ENCODE measurements at regions of chr17 and their contacts with region 1.

Region 1: GRCh38 chr17:39174907-39175694 is 9.1 kb upstream of the ARL5C start:
- DNase-seq: peak; percentile 67 to 91 (median 74)
- ATAC-seq: peak; percentile 95
- H3K4me3 ChIP-seq: no peak overlapping the region
- H3K4me3 Mint-ChIP-seq: no peak overlapping the region
- H3K27ac ChIP-seq: no peak overlapping the region
- H3K27ac Mint-ChIP-seq: no peak overlapping the region
- H3K4me1 ChIP-seq: peaks cover 22% of the 10 kb centered on the region
- H3K4me1 Mint-ChIP-seq: peaks cover 22% of the 10 kb centered on the region
- H3K27me3 ChIP-seq: no peaks in the 10 kb centered on the region
- H3K27me3 Mint-ChIP-seq: no peaks in the 10 kb centered on the region
- CTCF ChIP-seq: peak; percentile 82

Region 2: GRCh38 chr17:39069114-39069756 is 105.9 kb before region 1 on chr17:
- CTCF ChIA-PET with region 1: interaction called, 8 read pairs
- POLR2A ChIA-PET with region 1: no interaction called
- intact Hi-C with region 1: loop called (anchors 1 kb)
- DNase-seq: peak in 4 of 14 experiments; percentile 45 to 70 (median 66)
- ATAC-seq: peak; percentile 97
- H3K4me3 ChIP-seq: no peak overlapping the region
- H3K4me3 Mint-ChIP-seq: no peak overlapping the region
- H3K27ac ChIP-seq: no peak overlapping the region
- H3K27ac Mint-ChIP-seq: no peak overlapping the region
- H3K4me1 ChIP-seq: peaks cover 7% of the 10 kb centered on the region
- H3K4me1 Mint-ChIP-seq: peaks cover 6% of the 10 kb centered on the region
- H3K27me3 ChIP-seq: no peaks in the 10 kb centered on the region
- H3K27me3 Mint-ChIP-seq: no peaks in the 10 kb centered on the region
- CTCF ChIP-seq: peak; percentile 72

Region 3: GRCh38 chr17:39164675-39165143 is 10.4 kb before region 1 on chr17:
- CTCF ChIA-PET with region 1: interaction called, 47 read pairs
- POLR2A ChIA-PET with region 1: interaction called, 4 read pairs
- intact Hi-C with region 1: no loop called
- DNase-seq: peak; percentile 56 to 85 (median 63)
- ATAC-seq: peak; percentile 86
- H3K4me3 ChIP-seq: peak overlapping the region; percentile 60
- H3K4me3 Mint-ChIP-seq: peak overlapping the region; percentile 90
- H3K27ac ChIP-seq: no peak overlapping the region
- H3K27ac Mint-ChIP-seq: no peak overlapping the region
- H3K4me1 ChIP-seq: peaks cover 32% of the 10 kb centered on the region
- H3K4me1 Mint-ChIP-seq: peaks cover 27% of the 10 kb centered on the region
- H3K27me3 ChIP-seq: peaks cover 17 to 22% of the 10 kb centered on the region in 2 experiments
- H3K27me3 Mint-ChIP-seq: peaks cover 34% of the 10 kb centered on the region
- CTCF ChIP-seq: peak; percentile 94

Region 4: GRCh38 chr17:39208893-39209292 is 33.8 kb after region 1 on chr17:
- CTCF ChIA-PET with region 1: no interaction called
- POLR2A ChIA-PET with region 1: no interaction called
- intact Hi-C with region 1: no loop called
- DNase-seq: peak in 5 of 14 experiments; percentile 21 to 60 (median 28)
- ATAC-seq: peak; percentile 7
- H3K4me3 ChIP-seq: no peak overlapping the region
- H3K4me3 Mint-ChIP-seq: peak overlapping the region; percentile 60
- H3K27ac ChIP-seq: peak overlapping the region in 1 of 2 donors; percentile 7
- H3K27ac Mint-ChIP-seq: peak overlapping the region; percentile 62
- H3K4me1 ChIP-seq: peaks cover 36% of the 10 kb centered on the region
- H3K4me1 Mint-ChIP-seq: peaks cover 29% of the 10 kb centered on the region
- H3K27me3 ChIP-seq: no peaks in the 10 kb centered on the region
- H3K27me3 Mint-ChIP-seq: no peaks in the 10 kb centered on the region
- CTCF ChIP-seq: no peak